Breast epithelium (tissue), 4 donors: ENCODE measurements at regions of chr6 and their contacts with region 1.

Region 1: DNA sequence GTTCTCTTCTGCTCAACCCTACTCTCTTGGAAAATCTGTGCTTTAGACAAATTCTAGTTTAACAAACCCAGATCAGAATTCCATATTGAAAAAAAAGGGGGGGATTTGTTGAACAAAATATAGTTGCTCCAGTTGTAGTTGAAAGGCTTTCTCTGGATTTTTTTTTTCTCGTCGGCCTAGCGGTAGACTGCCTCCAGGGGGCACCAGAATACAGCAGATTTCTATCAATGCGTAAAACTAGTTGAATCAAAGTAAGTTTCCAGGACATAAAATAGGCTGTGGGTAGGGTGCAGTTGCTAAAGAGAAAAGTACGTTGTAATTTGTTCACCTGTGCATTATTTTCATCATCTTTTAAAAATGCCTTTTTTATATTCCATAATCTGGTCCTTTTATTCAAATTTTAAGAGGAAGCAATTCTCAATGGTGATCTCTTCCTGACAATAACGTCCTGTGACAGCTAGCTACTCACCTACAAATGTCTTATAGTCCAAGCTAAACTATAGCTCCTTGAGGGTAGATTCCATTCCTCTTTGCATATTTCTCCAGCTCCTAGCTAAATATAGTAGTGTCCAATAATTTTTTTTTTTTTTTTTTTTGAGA is 105.4 kb downstream of the PERP start:
- DNase-seq: peak; percentile 59 to 63
- H3K4me3 ChIP-seq: no peak overlapping the region
- H3K27ac ChIP-seq: no peak overlapping the region
- H3K4me1 ChIP-seq: no peaks in the 10 kb centered on the region
- H3K27me3 ChIP-seq: no peaks in the 10 kb centered on the region
- CTCF ChIP-seq: peak; percentile 77 to 92 (median 90)
- POLR2A ChIP-seq: no peak

Region 2: DNA sequence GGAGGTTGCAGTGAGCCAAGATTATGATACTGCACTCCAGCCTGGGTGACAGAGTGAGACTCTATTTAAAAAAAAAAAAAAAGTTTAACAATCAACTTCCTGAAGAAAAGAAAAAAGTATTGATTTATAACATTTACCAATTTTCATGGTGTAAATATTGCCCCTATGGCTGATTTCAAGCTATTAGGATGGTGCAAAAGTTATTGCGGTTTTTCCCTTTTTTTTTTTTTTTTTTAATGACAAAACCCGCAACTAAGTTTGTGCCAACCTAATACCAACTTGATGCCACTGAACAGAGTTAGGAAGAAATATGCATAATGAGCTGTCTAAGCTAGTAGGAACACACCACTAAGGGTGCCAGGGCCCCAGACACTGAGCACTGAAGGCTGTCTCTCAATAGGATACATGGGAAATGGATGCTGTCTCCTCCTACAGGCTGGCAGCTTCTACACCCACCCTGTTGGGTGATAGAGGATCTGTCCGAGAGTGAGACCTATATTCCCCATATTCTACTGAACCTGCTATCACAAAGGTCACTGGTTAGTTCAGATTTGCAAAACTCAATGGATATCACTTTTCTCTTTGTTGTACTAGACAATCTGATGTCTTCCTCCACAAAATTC is 111.8 kb after region 1 on chr6:
- intact Hi-C with region 1: loop called (anchors 5 kb)
- DNase-seq: no peak
- H3K4me3 ChIP-seq: no peak overlapping the region
- H3K27ac ChIP-seq: no peak overlapping the region
- H3K4me1 ChIP-seq: no peaks in the 10 kb centered on the region
- H3K27me3 ChIP-seq: no peaks in the 10 kb centered on the region
- CTCF ChIP-seq: no peak
- POLR2A ChIP-seq: no peak